AG04450 (cell line): ENCODE measurements at regions of chr17 and their contacts with region 1.

Region 1: GRCh38 chr17:32386844-32387243 is 36.9 kb downstream of the ZNF207 start:
- DNase-seq: no peak
- H3K4me3 ChIP-seq: no peak overlapping the region
- H3K27ac ChIP-seq: no peak overlapping the region
- H3K27me3 ChIP-seq: no peaks in the 10 kb centered on the region
- CTCF ChIP-seq: no peak

Region 2: DNA sequence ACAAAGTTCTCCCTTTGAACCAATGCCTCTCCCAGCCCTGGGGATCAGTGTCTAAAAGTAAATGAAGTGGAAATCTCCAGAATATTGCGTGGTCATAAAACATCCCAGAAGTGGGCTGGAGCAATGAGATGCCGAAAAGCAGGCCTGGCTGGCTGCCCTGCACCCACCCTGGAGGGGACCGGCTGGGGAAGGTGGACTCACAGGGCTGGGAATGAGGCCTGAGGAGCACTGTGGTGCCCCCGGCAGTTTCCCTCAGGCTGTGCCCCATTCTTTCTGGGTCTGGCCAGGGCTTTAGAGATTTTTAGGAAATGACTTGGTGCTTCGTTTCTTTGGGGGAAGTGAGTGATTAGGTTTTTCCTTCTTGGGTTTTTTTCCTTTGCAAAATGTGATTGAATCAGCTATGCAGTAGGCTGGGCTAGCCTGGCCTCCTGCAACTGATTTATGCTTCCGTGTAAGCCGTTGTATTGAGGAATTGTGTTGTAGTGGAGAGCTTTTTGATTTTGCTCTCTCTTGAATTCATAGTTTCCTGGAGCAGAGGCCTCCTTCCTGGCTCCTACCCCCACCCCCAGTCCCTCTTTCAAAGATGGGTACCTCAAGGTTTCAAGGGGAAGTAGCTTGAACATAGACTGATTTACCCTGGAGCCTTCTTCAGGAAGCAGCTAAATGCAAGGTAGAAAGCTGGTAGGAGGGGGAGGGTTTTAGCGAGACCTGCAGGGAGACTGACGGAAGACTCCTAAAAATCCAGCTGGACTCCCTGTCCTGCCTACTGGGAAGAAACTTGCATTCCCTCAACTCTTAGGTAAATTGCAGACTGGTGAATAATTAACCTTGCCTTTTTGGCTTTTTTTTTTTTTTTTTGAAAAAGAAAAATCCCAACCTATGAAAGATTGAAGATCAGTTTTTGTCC is 825.1 kb before region 1 on chr17:
- CTCF ChIA-PET with region 1: no interaction called
- POLR2A ChIA-PET with region 1: no interaction called
- DNase-seq: no peak
- H3K4me3 ChIP-seq: peak overlapping the region; percentile 69
- H3K27ac ChIP-seq: peak overlapping the region; percentile 78
- H3K27me3 ChIP-seq: no peaks in the 10 kb centered on the region
- CTCF ChIP-seq: no peak

Region 3: GRCh38 chr17:32142038-32142856 is 244.6 kb before region 1 on chr17 and contains the start of gene RHOT1:
- CTCF ChIA-PET with region 1: no interaction called
- POLR2A ChIA-PET with region 1: no interaction called
- DNase-seq: peak; percentile 58
- H3K4me3 ChIP-seq: peak within 1 kb of the TSS; percentile 92
- H3K27ac ChIP-seq: peak within 1 kb of the TSS; percentile 91
- H3K27me3 ChIP-seq: no peaks in the 10 kb centered on the region
- CTCF ChIP-seq: peak; percentile 63
- polyA plus RNA-seq, gene RHOT1: 44.4 and 59.0 TPM in 2 replicates

Region 4: GRCh38 chr17:32253117-32253611 is 133.7 kb before region 1 on chr17:
- CTCF ChIA-PET with region 1: no interaction called
- POLR2A ChIA-PET with region 1: no interaction called
- DNase-seq: no peak
- H3K4me3 ChIP-seq: no peak overlapping the region
- H3K27ac ChIP-seq: no peak overlapping the region
- H3K27me3 ChIP-seq: no peaks in the 10 kb centered on the region
- CTCF ChIP-seq: peak; percentile 100

Region 5: DNA sequence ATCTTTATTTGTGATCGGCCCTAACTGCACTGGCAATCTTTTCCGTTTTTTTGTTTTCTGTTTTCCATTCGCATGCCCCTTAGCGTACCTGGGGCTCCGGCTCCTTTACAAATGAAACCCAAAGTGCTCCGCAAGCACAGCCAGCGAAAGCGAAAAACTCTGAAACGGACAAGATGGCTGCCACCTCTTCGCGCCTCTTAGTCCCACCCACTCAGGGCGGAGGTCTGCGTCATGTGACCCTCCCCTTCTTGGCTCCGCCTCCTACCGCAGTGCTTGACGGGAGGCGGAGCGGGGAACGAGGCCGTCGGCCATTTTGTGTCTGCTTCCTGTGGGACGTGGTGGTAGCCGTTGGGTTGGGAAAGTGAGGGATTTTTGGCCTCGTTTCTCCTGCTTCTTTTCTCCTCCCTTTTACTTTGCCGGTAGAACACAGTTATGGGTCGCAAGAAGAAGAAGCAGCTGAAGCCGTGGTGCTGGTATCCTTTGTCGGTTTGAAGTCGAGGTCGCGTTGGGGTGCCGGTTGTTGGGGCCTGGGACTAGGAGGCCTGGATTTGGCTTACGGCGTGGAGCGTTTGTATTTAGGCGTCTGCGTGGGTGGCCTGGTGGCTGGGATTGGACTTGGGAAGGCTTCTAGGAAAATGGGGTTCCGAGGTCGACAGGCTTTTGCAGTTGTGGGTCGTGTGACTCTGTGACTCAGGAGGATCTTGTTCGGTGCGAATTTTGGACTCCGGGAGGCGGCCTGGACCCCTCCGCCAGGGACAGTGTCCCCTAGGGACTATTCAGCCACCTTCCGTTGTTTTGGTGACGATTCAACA is 36.8 kb before region 1 on chr17 and contains the start of gene ZNF207:
- CTCF ChIA-PET with region 1: no interaction called
- POLR2A ChIA-PET with region 1: interaction called, 10 read pairs
- DNase-seq: peak; percentile 92
- H3K4me3 ChIP-seq: peak within 1 kb of the TSS; percentile 100
- H3K27ac ChIP-seq: peak within 1 kb of the TSS; percentile 98
- H3K27me3 ChIP-seq: no peaks in the 10 kb centered on the region
- CTCF ChIP-seq: no peak
- polyA plus RNA-seq, gene ZNF207: 219 and 239 TPM in 2 replicates

Region 6: DNA sequence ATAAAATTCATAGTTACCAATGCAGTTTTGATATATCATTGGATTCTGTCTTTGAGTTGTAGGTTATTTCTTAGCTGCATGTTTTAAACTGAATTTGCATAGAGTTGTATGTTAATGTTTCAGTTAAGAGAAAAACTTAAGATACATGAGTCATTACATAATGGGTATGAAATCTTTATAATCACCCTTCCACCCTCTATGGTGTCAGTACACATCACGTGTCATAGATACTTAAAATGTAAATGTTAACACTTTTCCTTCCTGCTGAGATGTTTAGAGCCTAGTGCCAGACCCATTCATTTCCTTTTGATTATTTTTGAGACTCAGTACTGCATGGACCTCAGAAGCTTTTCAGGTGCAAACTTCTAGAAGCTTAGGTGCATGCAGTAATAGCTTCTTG is 16.4 kb before region 1 on chr17:
- CTCF ChIA-PET with region 1: no interaction called
- POLR2A ChIA-PET with region 1: interaction called, 15 read pairs
- DNase-seq: no peak
- H3K4me3 ChIP-seq: no peak overlapping the region
- H3K27ac ChIP-seq: no peak overlapping the region
- H3K27me3 ChIP-seq: no peaks in the 10 kb centered on the region
- CTCF ChIP-seq: no peak